Activated naive CD4-positive, alpha-beta T cell treated with anti-CD3 and anti-CD28 coated beads for 36 hours (primary cell): ENCODE measurements at regions of chr4 and their contacts with region 1.

Region 1: GRCh38 chr4:107050525-107051135 is 14.5 kb upstream of the DKK2 start:
- DNase-seq: no peak
- H3K4me3 Mint-ChIP-seq: no peak overlapping the region
- H3K27ac Mint-ChIP-seq: no peak overlapping the region
- H3K4me1 Mint-ChIP-seq: no peaks in the 10 kb centered on the region
- H3K27me3 Mint-ChIP-seq: peaks cover 2% of the 10 kb centered on the region

Region 2: GRCh38 chr4:106172861-106173260 is 877.8 kb before region 1 on chr4:
- CTCF ChIA-PET with region 1: no interaction called
- intact Hi-C with region 1: loop called (anchors 5 kb)
- DNase-seq: no peak
- H3K4me3 Mint-ChIP-seq: no peak overlapping the region
- H3K27ac Mint-ChIP-seq: no peak overlapping the region
- H3K4me1 Mint-ChIP-seq: no peaks in the 10 kb centered on the region
- H3K27me3 Mint-ChIP-seq: no peaks in the 10 kb centered on the region